ENCODE measurements at regions of chr2 and their contacts with region 1.

Region 1: GRCh38 chr2:215002500-215002899 is 135.9 kb downstream of the ABCA12 start:
- DNase-seq: peak; percentile 64
- H3K4me3 ChIP-seq: no peak overlapping the region
- H3K27ac ChIP-seq: no peak overlapping the region
- H3K4me1 ChIP-seq: no peaks in the 10 kb centered on the region
- H3K27me3 ChIP-seq: no peaks in the 10 kb centered on the region
- CTCF ChIP-seq: peak; percentile 63

Region 2: DNA sequence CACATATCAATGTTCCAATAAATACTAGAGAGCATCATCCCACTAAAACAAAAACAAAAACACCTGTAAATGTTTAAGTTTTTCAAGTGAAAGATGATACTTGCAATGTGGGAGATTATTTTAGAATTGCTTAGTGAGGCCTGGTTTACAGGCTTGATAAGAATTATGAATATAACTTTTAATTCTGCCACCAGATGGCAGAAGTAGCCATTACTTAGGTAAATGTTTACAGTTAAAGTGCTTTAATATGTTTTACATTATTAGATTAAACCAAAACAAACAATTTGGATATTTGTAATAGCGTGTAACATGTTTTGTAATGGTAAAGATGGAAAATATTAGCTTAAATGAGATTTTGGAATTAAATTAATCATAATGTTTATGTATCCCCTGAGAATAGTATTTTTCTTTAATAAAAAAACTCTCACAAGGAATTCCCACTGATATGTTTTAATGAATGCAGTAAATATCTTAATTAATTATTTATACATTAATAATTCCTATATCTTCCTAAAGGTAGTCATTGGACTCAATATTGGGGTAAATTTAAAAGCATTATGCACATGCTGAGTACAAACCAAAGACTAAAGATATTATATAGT is 1196.3 kb before region 1 on chr2:
- CTCF ChIA-PET with region 1: no interaction called
- POLR2A ChIA-PET with region 1: no interaction called
- intact Hi-C with region 1: loop called (anchors 10 kb)
- DNase-seq: peak; percentile 42
- H3K4me3 ChIP-seq: no peak overlapping the region
- H3K27ac ChIP-seq: no peak overlapping the region
- H3K4me1 ChIP-seq: no peaks in the 10 kb centered on the region
- H3K27me3 ChIP-seq: no peaks in the 10 kb centered on the region
- CTCF ChIP-seq: peak; percentile 64

Region 3: GRCh38 chr2:214310319-214310718 is 692.2 kb before region 1 on chr2:
- CTCF ChIA-PET with region 1: interaction called, 12 read pairs
- POLR2A ChIA-PET with region 1: no interaction called
- intact Hi-C with region 1: no loop called
- DNase-seq: peak; percentile 23
- H3K4me3 ChIP-seq: no peak overlapping the region
- H3K27ac ChIP-seq: no peak overlapping the region
- H3K4me1 ChIP-seq: no peaks in the 10 kb centered on the region
- H3K27me3 ChIP-seq: no peaks in the 10 kb centered on the region
- CTCF ChIP-seq: peak; percentile 47